ENCODE measurements at regions of chr2 and their contacts with region 1.

Region 1: GRCh38 chr2:149611099-149611820 is 23.7 kb upstream of the MMADHC start:
- DNase-seq: peak; percentile 22

Region 2: DNA sequence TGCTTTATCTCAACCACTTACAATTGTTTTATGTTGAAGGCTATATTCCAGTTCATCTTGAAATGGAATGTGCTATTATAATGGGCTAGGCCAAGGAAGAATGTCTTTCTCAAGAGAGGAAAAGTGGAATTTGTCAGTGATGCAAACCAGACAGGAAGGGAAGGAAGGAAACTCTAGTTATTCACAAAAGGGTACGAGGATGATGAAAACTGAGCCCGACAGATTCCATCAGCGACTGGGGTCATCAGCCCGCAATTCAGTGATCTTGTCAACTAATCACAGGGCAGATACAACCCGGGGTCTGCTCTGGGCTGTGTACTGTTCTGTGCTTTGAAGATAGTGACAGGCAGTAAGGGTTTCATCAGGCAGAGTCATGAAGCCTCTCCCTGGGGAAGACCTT is 304.2 kb before region 1 on chr2:
- in situ Hi-C with region 1: no loop called
- DNase-seq: no peak

Region 3: DNA sequence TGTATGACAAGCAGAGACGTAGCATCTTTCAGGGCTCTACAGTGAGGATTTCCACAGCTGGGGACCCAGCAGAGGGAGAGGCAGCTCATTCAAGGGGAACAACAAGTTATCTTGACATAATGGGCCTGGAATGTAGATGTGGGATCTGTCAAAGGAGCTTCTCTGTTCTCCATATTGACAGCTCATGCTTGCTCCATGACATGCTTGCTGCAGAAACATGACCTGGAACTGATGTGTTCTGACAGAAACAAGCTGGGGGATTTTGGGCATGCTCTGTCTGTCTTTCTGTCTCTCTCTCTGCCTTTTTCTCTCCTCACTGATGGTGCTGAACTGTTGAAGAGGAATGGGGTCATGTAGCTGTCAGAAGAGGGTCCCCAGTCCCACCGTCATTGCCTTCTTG is 103.3 kb before region 1 on chr2:
- in situ Hi-C with region 1: no loop called
- DNase-seq: no peak

Region 4: GRCh38 chr2:149715005-149715592 is 103.8 kb after region 1 on chr2:
- in situ Hi-C with region 1: loop called (anchors 25 kb)
- DNase-seq: peak; percentile 70

Region 5: DNA sequence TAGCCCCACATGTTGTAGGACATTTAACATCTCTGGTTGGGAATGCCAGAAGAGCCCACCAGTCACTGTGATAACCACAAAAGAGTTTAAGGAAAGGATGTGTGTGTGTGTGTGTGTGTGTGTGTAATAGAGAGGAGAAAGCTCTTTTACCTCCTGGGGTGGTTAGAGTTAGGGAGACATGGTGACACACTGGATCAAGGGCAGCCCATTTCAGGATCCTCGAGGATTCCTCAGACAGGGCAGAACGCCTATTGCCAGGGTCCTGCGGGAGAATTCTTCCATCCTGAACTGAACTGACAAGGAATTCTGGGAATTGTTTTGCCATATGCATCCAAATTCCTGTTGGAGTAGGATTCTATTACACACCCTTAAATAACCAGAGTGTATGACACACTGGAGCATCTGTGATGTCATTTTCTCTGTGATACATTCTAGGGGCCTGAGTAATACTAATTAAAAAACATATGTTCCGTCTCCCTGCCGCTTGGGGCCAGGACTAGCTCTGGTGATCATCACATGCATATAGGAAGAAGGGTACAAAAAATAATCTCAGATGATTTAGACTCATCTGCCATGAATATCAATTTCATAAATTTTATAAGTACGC is 132.7 kb after region 1 on chr2:
- in situ Hi-C with region 1: no loop called
- DNase-seq: no peak

Region 6: GRCh38 chr2:150001788-150002187 is 390.5 kb after region 1 on chr2:
- in situ Hi-C with region 1: no loop called
- DNase-seq: no peak

Measured in SK-MEL-5 (cell line).